WTC11 (cell line): ENCODE measurements at regions of chr22 and their contacts with region 1.

Region 1: DNA sequence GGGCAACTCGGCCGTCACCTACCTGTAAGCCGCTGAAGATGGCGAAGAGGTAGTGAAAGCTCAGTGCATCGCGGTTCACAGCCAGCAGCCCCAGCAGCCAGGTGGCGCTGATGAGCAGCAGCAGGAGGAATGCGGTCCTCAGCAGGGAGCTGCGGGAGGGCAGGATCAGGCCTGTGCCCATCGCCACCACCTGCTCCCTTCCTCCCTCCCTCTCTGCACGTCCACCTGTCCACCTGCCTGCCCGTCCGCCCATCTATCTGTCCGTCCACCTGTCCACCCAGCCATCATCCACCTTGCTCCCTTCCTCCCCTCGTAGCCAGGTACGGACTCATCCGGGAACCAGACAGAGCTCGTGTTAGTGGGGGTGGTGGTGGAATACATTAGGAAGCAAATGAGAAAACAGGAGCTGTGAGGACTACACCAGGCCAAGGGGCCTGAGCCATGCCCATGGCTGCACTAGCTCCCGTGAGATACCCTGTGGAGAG is 32.2 kb downstream of the TRMU start:
- DNase-seq: peak; percentile 94
- ATAC-seq: peak; percentile 87
- H3K4me3 Mint-ChIP-seq: no peak overlapping the region
- H3K27ac Mint-ChIP-seq: no peak overlapping the region; the same call in 1 of the 2 replicates
- H3K4me1 Mint-ChIP-seq: peaks cover 6% of the 10 kb centered on the region; the same call in 1 of the 2 replicates
- H3K27me3 Mint-ChIP-seq: no peaks in the 10 kb centered on the region
- CTCF ChIP-seq: peak; percentile 85

Region 2: GRCh38 chr22:46175631-46176030 is 192.1 kb before region 1 on chr22:
- CTCF ChIA-PET with region 1: no interaction called
- POLR2A ChIA-PET with region 1: no interaction called
- DNase-seq: no peak
- ATAC-seq: no peak
- H3K4me3 Mint-ChIP-seq: no peak overlapping the region
- H3K27ac Mint-ChIP-seq: no peak overlapping the region
- H3K4me1 Mint-ChIP-seq: no peaks in the 10 kb centered on the region
- H3K27me3 Mint-ChIP-seq: peaks cover 4% of the 10 kb centered on the region
- CTCF ChIP-seq: no peak

Region 3: DNA sequence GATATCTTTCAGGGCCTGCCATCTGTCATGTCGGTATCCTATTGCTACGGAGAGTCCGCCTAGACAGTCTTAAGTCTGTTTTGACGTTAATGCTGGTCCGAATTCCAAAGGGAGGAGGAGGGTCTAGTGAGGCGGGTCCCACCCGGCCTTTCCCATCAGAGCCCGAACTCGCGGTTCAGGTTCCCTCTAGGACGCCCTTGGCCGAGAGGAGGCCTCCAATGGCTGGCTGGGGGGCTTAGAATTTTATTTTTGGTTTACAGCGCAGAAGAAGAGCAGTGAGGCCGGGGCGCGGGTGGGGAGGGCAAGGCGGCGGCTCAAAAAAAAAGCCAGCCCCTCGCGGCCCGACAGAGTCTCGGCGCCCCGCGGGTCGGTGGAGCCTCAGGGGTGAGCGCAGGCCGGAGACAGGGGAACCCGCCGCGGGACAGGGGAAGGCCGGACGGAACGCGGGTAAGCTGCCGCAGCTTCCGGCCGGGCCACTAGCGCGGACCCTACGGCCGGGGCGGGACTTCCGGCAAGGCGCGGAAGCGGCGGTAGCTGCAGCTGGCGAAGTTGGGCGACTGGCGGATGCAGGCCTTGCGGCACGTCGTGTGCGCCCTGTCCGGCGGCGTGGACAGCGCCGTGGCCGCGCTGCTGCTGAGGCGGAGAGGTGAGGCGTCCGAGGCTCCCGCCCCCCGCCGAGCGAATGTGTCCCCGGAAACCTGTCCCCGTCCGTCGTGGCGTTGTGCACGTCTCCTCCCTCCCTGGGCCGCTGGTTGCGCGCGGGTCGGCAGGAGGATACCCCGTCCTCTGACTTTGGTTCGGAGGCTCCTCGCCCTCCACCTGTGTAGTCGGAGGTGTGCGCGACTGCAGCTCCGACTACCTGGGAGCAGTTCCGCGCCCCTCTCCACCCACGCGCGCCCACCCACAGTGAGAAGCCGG is 32.3 kb before region 1 on chr22 and contains the start of gene TRMU:
- CTCF ChIA-PET with region 1: interaction called, 11 read pairs
- POLR2A ChIA-PET with region 1: no interaction called
- DNase-seq: peak; percentile 85
- ATAC-seq: peak; percentile 94
- H3K4me3 Mint-ChIP-seq: peak within 1 kb of the TSS; percentile 90
- H3K27ac Mint-ChIP-seq: peak within 1 kb of the TSS; percentile 96
- H3K4me1 Mint-ChIP-seq: peaks cover 18% of the 10 kb centered on the region
- H3K27me3 Mint-ChIP-seq: no peaks in the 10 kb centered on the region
- CTCF ChIP-seq: no peak
- total RNA-seq, gene TRMU: 62.4 to 103 TPM (median 64.6 TPM) in 3 replicates

Region 4: DNA sequence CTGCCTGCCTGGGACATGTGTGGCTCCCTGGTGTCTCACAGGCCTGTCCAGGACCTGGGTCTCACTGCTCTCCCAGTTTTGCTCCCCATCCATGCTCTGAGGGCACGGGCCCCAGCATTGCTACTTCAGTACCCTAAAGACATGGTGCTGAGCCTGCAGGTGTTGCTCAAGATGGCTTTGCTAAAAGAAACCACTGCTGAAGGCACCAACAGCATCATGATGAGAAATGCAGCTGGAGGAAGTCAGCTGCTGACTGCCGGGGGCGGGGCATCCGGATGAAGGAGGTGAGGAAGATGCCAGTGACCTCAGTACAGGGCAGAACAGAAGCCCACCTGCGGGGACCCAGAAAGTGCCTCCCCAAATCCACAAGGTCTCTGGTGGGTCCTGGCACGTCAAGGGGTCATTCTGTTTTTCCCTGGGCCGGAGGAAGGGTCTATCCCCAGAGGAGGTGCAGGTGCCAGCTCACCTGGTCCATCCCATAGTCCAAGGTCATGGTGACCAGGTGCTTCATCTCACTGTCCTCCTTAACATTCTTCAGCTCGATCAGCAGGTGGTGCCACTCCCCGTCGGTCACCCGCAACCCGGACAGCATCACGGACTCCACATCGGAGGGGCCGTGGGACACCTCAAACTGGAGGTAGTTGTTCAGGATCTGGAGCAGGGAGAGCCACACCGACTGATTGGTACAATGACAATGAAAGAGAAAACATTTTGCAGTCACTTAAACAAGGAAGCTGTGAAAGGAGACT is 31.7 kb after region 1 on chr22:
- CTCF ChIA-PET with region 1: interaction called, 39 read pairs
- POLR2A ChIA-PET with region 1: no interaction called
- DNase-seq: no peak
- ATAC-seq: no peak
- H3K4me3 Mint-ChIP-seq: no peak overlapping the region
- H3K27ac Mint-ChIP-seq: no peak overlapping the region
- H3K4me1 Mint-ChIP-seq: no peaks in the 10 kb centered on the region
- H3K27me3 Mint-ChIP-seq: no peaks in the 10 kb centered on the region
- CTCF ChIP-seq: no peak

Region 5: GRCh38 chr22:46450931-46451561 is 83.3 kb after region 1 on chr22:
- CTCF ChIA-PET with region 1: interaction called, 11 read pairs
- POLR2A ChIA-PET with region 1: no interaction called
- DNase-seq: no peak
- ATAC-seq: no peak
- H3K4me3 Mint-ChIP-seq: no peak overlapping the region
- H3K27ac Mint-ChIP-seq: peak overlapping the region; percentile 4; the same call in 1 of the 2 replicates
- H3K4me1 Mint-ChIP-seq: no peaks in the 10 kb centered on the region
- H3K27me3 Mint-ChIP-seq: no peaks in the 10 kb centered on the region
- CTCF ChIP-seq: no peak

Region 6: DNA sequence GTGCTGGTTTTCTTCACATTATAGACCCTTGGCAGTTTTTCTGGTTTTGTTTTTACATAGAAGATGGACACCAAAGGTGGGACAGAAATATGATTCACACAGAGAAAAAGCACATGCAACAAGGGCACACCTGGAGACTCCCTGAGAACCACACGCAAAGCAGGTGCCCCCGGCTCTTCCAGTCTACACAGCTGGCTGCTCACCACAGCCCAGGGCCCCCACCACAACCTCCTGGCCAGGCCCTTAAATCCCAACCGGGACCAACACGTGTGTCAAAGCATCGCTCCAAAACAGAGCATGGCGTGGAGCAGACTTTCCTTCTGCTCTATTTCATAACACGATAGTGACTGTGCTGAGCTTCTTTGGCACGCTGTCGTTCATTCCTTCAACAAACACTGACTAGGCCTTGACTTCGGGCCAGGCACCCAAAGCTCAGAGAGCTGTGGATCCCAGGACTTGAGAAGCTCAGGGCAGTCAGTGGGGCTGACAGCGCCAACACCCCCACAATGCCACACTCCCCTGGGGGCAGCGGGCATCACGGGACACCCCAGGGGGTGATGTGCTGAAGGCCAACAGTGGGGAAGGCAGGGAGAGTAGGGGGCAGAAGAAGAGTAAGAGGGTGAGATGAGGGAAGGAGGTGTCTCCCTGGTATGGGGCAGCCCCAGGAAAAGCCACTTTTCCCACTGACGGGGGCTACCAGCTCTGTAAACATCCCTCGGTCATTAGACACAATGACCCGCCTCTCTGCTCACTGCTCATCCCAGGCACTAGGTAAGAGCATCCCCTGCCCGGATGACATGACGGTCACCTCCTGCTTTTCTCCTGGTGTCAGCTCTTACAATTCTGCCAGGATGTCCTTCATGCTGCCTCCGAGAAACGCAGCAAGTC is 143.6 kb after region 1 on chr22:
- CTCF ChIA-PET with region 1: interaction called, 10 read pairs
- POLR2A ChIA-PET with region 1: no interaction called
- DNase-seq: no peak
- ATAC-seq: no peak
- H3K4me3 Mint-ChIP-seq: no peak overlapping the region
- H3K27ac Mint-ChIP-seq: peak overlapping the region; percentile 63; the same call in 1 of the 2 replicates
- H3K4me1 Mint-ChIP-seq: peaks cover 27% of the 10 kb centered on the region
- H3K27me3 Mint-ChIP-seq: no peaks in the 10 kb centered on the region
- CTCF ChIP-seq: no peak

Region 7: DNA sequence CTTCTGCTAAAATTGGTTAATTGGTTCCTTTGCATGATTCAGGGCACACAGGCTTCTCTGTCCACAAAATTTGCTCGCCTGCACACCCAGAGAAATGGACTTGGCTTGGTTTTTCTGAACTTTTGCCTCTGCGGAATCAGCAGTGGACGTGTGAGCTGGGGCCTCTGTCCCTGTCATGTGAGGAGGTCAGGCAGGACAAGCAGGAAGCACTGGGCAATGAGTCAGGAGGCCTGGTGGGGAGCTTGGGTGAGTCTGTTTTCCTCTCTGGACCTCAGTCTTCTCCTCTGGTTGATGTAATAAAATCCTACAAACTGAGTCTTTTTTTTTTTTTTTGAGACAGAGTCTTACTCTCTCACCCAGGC is 180.1 kb after region 1 on chr22:
- CTCF ChIA-PET with region 1: interaction called, 156 read pairs
- POLR2A ChIA-PET with region 1: no interaction called
- DNase-seq: no peak
- ATAC-seq: no peak
- H3K4me3 Mint-ChIP-seq: no peak overlapping the region
- H3K27ac Mint-ChIP-seq: no peak overlapping the region
- H3K4me1 Mint-ChIP-seq: no peaks in the 10 kb centered on the region
- H3K27me3 Mint-ChIP-seq: peaks cover 6% of the 10 kb centered on the region
- CTCF ChIP-seq: no peak